Caco-2 (cell line): ENCODE measurements at regions of chr21 and their contacts with region 1.

Region 1: GRCh38 chr21:29678626-29679025 is 261.2 kb downstream of the GRIK1 start:
- DNase-seq: no peak
- H3K4me3 ChIP-seq: no peak overlapping the region
- H3K4me3 Mint-ChIP-seq: no peak overlapping the region
- H3K27ac Mint-ChIP-seq: no peak overlapping the region
- H3K4me1 ChIP-seq: no peaks in the 10 kb centered on the region
- H3K4me1 Mint-ChIP-seq: no peaks in the 10 kb centered on the region
- H3K27me3 ChIP-seq: no peaks in the 10 kb centered on the region; the same call in none of the 2 replicates
- H3K27me3 Mint-ChIP-seq: peaks cover 27% of the 10 kb centered on the region
- CTCF ChIP-seq: no peak

Region 2: GRCh38 chr21:29626801-29627470 is 51.7 kb before region 1 on chr21:
- CTCF ChIA-PET with region 1: no interaction called
- POLR2A ChIA-PET with region 1: no interaction called
- intact Hi-C with region 1: loop called (anchors 1 kb)
- DNase-seq: no peak
- H3K4me3 ChIP-seq: no peak overlapping the region
- H3K4me3 Mint-ChIP-seq: no peak overlapping the region
- H3K27ac Mint-ChIP-seq: no peak overlapping the region
- H3K4me1 ChIP-seq: no peaks in the 10 kb centered on the region
- H3K4me1 Mint-ChIP-seq: no peaks in the 10 kb centered on the region
- H3K27me3 ChIP-seq: no peaks in the 10 kb centered on the region
- H3K27me3 Mint-ChIP-seq: no peaks in the 10 kb centered on the region
- CTCF ChIP-seq: no peak